Activated T-helper 1 cell treated with anti-CD3 and anti-CD28 coated beads, Interleukin-12 subunit alpha, Interleukin-12 subunit beta, Interleukin-2, Interleukin-4 antibody, amounts not matched to agents 30 ng/mL and 10 ng/mL and 1 ng/mL, durations not matched to agents 14 hours and 24 hours and 36 hours (primary cell): ENCODE measurements at regions of chr22 and their contacts with region 1.

Region 1: DNA sequence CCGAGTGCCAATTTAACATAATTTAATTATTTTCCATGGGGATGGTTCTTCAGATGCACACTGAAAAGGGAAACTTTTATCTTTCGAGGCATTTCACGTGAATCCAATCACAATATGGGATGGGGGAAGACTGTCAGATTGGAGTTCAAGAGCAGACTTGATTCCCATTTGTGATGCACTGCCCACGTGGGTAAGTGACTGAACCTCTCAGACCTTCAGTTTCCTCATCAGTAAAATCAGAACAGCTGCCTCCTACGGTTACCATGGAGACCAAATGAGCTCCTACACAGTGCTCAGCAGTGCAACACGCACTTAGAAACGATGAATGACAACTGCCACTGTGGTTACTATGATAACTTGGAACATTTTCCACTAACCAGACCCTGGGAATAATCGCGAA is 21.7 kb downstream of the KIAA0930 start:
- DNase-seq: no peak
- H3K4me3 Mint-ChIP-seq: no peak overlapping the region
- H3K27ac Mint-ChIP-seq: peak overlapping the region; percentile 79
- H3K4me1 Mint-ChIP-seq: peaks cover 13% of the 10 kb centered on the region
- H3K27me3 Mint-ChIP-seq: no peaks in the 10 kb centered on the region

Region 2: GRCh38 chr22:45192701-45193187 is 26.2 kb before region 1 on chr22:
- intact Hi-C with region 1: loop called (anchors 2 kb)
- DNase-seq: no peak
- H3K4me3 Mint-ChIP-seq: no peak overlapping the region
- H3K27ac Mint-ChIP-seq: no peak overlapping the region
- H3K4me1 Mint-ChIP-seq: no peaks in the 10 kb centered on the region
- H3K27me3 Mint-ChIP-seq: no peaks in the 10 kb centered on the region